ENCODE measurements at regions of chr3 and their contacts with region 1.

Region 1: DNA sequence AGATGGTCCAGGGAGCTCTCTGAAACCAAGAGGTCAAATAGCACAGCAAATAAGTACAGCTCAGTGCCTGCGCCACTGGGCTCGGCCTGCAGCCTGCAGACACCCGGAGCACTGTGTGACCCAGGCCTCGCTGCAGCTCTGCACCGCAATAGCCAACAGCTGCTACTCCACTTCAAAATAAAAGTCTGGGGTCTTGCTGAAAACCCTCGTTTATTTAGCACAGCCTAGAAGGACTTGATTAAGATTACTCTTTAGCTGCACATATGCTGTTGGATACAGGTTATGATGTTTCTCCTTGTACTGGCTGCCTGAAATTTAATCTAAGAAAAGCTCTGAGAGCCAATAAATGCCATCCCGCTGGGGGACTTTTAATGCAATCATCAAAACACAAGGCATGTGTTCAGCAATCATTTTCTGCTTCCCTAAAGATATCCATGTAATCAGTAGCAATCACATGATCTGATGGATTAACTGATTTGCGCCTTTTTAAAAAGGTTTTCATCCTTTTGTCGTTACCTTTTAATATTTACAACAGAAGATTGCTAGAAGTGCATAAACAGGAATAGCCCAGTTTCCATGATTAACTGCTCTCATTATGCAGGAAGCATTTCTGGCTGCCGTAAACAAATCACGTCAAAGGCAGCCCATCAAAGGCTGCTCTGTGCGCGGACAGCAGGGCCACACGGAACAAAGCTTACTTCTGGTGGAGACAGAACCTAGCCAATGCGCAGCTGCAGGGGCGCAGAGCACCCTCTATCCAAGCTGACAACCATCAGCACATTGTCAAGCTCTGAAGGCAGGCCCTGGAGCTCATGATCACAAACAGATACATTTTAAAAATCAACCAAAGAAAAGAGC is 58.8 kb downstream of the CLASP2 start:
- DNase-seq: peak; percentile 35
- H3K4me3 ChIP-seq: peak overlapping the region; percentile 15 to 25
- H3K27ac ChIP-seq: peak overlapping the region; percentile 58 to 63
- H3K4me1 ChIP-seq: no peaks in the 10 kb centered on the region
- H3K27me3 ChIP-seq: no peaks in the 10 kb centered on the region
- CTCF ChIP-seq: no peak
- POLR2A ChIP-seq: no peak

Region 2: DNA sequence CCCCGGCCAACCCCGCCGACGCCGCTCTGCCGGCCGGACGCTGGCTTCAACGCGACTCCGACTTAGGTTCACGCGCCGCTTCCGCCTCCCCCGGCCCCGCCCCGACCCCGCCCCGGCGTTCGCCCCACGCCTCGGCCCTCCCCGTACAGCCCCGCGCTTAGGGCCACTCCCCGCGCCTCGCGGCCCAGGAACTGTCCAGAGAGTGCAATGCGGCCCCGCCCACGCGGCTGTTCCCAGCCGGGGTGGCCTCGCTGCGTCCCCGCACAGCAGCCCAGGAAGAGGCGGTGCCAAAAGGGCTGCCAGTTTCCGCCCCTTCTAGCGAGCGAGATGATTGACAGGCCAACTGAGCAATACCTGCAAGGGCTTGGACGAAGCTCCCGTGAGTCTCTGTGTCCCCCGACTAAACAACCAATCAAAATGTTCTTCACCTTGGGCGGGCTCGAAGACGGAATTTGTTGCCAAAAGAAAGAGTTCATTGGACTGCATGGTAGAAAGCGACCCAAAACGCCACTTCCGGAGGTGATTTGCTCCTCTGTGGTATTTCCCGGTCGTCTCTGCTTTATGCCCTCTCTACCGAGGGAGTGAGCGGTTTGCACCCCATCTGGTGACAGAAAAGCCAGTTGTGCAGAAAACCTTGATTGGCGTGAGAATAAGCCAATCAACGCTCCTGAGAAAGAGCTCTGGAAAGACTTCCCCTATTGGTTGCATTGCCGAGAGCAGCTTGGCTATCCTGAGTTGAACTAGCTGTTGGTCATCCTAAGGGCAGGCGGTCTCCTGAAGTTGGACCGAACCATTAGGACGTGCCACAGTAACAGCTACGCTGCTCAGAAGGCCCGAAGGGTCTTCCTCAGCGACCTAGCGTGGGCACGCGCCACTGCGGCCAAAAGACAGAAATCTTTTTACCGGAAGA is 218.6 kb before region 1 on chr3 and contains the start of gene UBP1:
- intact Hi-C with region 1: loop called (anchors 10 kb)
- DNase-seq: peak; percentile 99
- H3K4me3 ChIP-seq: peak within 1 kb of the TSS; percentile 61 to 73
- H3K27ac ChIP-seq: peak within 1 kb of the TSS; percentile 88 to 92
- H3K4me1 ChIP-seq: no peaks in the 10 kb centered on the region
- H3K27me3 ChIP-seq: no peaks in the 10 kb centered on the region
- CTCF ChIP-seq: peak in 2 of 4 experiments; percentile 26 to 49
- POLR2A ChIP-seq: peak; percentile 79
- total RNA-seq, gene UBP1: 52.3 to 57.2 TPM

Region 3: DNA sequence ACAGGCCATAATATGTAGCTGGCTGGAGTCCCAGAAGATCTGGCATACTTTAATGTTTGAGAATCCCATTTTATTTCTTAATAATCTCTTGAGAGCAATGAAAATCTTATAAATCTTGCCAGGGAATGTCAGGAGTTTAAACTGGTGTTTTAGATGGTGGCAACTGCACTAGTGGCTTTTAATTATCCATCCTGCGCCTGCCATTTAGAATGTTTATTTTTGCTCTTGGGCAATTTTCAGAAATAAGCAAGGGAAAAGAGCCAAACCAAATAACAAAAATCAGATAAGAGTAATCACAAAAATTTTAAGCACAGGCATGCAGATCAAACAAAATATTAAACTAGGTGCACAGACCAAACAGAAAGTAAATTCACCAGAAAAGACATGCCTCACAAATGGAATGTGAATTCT is 177.1 kb before region 1 on chr3:
- intact Hi-C with region 1: no loop called
- DNase-seq: peak; percentile 10
- H3K4me3 ChIP-seq: no peak overlapping the region
- H3K27ac ChIP-seq: peak overlapping the region in 1 of 2 donors; percentile 33
- H3K4me1 ChIP-seq: no peaks in the 10 kb centered on the region
- H3K27me3 ChIP-seq: no peaks in the 10 kb centered on the region
- CTCF ChIP-seq: no peak
- POLR2A ChIP-seq: no peak

Region 4: DNA sequence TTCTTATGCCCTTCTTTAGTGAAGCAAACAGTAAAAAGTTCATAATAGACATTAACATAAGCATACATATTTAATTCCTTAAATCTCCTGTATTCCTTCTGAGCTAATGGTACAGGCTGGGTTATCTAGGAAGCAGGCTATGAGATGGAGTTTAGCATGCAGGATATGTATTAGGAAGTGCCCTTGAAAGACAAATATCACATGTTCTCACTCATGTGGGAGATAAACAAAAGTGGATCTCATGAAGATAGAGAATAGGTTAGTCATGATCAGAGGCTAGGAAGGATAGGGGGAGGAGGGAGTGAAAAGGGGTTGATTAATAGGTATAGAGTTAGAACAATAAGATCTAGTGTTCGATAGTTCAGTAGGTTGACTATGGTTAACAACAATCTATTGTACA is 46.6 kb before region 1 on chr3:
- intact Hi-C with region 1: no loop called
- DNase-seq: no peak
- H3K4me3 ChIP-seq: no peak overlapping the region
- H3K27ac ChIP-seq: no peak overlapping the region
- H3K4me1 ChIP-seq: no peaks in the 10 kb centered on the region
- H3K27me3 ChIP-seq: no peaks in the 10 kb centered on the region
- CTCF ChIP-seq: no peak
- POLR2A ChIP-seq: no peak

Region 5: GRCh38 chr3:33807190-33807589 is 148.0 kb after region 1 on chr3:
- intact Hi-C with region 1: no loop called
- DNase-seq: no peak
- H3K4me3 ChIP-seq: no peak overlapping the region
- H3K27ac ChIP-seq: no peak overlapping the region
- H3K4me1 ChIP-seq: no peaks in the 10 kb centered on the region
- H3K27me3 ChIP-seq: no peaks in the 10 kb centered on the region
- CTCF ChIP-seq: no peak
- POLR2A ChIP-seq: no peak